PC-3 (cell line): ENCODE measurements at regions of chr21 and their contacts with region 1.

Region 1: DNA sequence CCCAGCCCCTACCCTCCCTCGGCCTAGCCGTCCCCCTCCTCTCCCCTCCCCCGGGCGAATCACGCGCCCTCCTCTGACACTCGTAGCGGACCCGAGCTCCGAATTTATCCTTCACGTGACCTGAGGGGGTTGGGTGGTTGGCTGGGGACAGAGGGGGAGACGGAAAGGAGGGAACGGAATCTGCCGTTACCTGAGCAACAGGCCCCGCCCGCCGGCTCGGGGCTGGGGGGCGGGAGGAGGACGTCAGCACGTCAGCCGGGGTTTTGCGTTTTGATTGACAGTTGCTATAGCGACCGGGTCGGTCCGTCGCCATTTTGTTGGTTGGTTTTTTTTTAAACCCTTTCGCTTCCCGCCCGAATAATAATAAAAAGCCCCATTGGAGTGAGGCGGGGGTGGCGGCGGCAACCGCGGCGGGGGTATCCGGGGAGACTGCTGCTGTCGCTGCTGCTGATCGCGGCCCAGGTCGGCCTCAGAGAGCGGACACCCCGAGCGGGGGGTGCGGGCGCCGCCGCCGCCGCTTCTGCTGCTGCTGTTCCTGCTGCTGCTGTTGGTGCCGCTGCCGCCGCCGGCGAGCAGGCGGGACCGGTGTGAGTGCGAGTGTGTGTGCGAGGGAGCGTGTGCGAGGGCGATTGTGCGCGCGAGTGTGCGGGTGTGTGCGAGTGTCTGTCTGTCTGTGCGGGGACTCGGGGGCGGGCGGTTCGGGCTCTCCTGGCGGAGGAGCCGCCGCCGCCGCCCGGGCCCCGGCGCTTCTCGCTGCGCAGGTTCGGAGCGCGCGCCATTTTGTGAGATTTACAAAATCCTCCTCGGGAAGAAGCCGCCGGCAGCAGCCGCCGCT is at the start of gene DYRK1A:
- DNase-seq: peak; percentile 99
- ATAC-seq: peak; percentile 71
- H3K4me3 ChIP-seq: peak within 1 kb of the TSS; percentile 79
- H3K27ac ChIP-seq: peak within 1 kb of the TSS; percentile 96
- H3K4me1 ChIP-seq: peaks cover 28% of the 10 kb centered on the region
- H3K27me3 ChIP-seq: no peaks in the 10 kb centered on the region
- CTCF ChIP-seq: no peak
- total RNA-seq, gene DYRK1A: 48.7 and 59.1 TPM in 2 replicates

Region 2: DNA sequence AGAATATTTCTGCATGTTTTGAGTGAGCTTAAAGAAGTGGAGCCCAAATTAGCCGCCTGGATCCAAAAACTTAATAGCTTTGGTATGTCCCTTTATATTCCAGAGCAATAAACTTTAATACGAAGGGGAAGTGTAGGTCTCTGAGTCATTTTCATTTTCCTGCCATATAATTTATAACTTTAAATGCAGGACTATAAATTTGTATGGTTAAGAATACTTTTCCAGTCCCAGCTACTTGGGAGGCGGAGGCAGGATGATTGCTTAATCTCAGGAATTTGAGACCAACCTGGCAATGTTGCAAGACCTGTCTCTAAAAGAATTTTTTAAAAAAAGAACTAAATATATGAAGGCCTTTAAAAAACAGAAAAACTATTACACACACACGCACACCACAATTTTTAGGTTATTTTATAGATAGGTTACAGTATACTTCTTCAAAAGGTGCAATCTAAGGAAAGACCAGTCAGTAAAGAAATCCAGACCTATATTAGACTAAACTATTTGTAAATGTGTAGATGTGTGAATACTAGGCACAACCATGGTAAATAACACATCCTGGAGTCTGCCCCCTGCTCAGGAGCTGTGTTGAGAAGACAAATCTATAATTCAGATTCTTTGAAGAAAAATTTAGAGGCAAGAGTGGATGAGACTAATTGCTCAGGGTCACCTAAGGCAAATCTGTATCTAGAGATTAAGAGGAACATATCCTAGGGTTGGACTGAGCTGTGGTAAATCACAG is 213.3 kb before region 1 on chr21:
- CTCF ChIA-PET with region 1: no interaction called
- POLR2A ChIA-PET with region 1: no interaction called
- intact Hi-C with region 1: loop called (anchors 10 kb)
- DNase-seq: peak; percentile 94
- ATAC-seq: peak; percentile 59
- H3K4me3 ChIP-seq: peak overlapping the region; percentile 25; the same call in 1 of the 2 replicates
- H3K27ac ChIP-seq: peak overlapping the region; percentile 90
- H3K4me1 ChIP-seq: peaks cover 42% of the 10 kb centered on the region
- H3K27me3 ChIP-seq: no peaks in the 10 kb centered on the region
- CTCF ChIP-seq: no peak

Region 3: DNA sequence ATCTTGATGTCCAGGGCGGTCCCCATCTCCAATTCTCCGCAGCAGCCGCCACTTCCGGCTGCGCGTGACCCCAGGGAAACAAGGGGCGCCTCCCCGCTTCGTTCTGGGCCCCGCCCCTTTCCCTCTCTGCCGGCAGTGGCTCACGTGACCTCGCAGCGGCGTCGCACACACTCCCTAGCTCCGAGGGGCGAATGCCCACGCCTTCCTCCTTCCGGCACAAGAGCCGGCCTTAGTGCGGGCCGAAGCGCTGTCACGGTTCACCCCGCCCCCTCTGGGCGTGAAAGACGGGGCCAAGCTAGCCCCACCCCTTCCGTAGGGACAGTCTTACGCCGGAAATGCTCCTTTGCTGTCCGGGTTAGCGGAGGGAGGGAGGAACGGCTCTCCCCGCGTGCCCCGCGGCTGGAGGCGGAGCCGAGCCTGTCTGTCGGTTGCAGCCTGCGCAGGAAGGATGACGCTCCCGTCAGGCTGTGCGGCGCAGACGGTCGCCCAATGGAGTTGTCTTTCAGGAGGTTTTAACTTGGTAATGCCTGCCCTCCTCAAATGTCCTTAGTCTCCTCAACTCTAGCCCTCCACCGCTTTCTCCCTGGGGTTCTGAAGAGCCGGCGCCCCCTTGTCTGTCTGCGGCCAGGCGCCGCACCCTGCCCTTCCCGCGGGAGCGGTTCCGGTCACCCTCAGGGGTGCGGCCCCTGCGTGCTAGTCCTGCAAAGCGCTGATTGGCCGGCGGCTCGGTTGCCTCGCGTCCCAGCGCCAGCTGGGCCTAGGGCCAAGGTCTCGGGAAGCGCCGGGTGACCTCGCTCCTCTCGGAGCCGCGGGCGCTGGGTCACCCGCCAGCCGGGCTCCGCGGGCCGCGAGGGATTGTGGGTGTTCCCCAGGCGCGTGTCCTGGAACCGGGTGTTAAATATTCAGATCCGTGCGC is 99.2 kb before region 1 on chr21 and contains the start of gene VPS26C:
- CTCF ChIA-PET with region 1: no interaction called
- POLR2A ChIA-PET with region 1: interaction called, 15 read pairs
- intact Hi-C with region 1: loop called (anchors 1 kb)
- DNase-seq: peak; percentile 99
- ATAC-seq: peak; percentile 86
- H3K4me3 ChIP-seq: peak within 1 kb of the TSS; percentile 69
- H3K27ac ChIP-seq: peak within 1 kb of the TSS; percentile 94
- H3K4me1 ChIP-seq: peaks cover 23% of the 10 kb centered on the region
- H3K27me3 ChIP-seq: no peaks in the 10 kb centered on the region
- CTCF ChIP-seq: no peak
- total RNA-seq, gene VPS26C: 46.8 and 63.3 TPM in 2 replicates

Region 4: GRCh38 chr21:37338671-37339551 is 27.8 kb before region 1 on chr21:
- CTCF ChIA-PET with region 1: no interaction called
- POLR2A ChIA-PET with region 1: interaction called, 4 read pairs
- intact Hi-C with region 1: loop called (anchors 1 kb)
- DNase-seq: peak; percentile 97
- ATAC-seq: peak; percentile 95
- H3K4me3 ChIP-seq: peak overlapping the region; percentile 51
- H3K27ac ChIP-seq: peak overlapping the region; percentile 95
- H3K4me1 ChIP-seq: peaks cover 44% of the 10 kb centered on the region
- H3K27me3 ChIP-seq: no peaks in the 10 kb centered on the region
- CTCF ChIP-seq: no peak

Region 5: DNA sequence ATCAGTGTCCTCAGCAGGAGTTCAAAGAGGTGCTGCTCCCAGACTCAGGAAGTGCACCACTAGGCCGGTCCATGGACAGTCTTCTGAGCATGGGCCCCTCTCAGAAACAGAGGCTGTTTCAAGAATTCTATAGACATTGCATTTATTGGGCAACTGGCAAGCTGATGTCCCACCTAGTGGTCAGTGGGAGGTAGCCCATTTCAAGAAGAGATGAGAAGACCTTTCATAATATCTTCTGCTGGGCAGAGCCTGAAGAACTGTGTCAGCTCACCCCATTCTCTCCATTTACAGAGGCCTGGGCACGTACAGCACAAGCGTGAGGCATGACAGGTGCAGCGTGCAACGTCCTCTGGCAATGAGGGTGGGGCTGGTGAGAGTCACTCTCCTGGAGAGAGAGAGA is 215.9 kb after region 1 on chr21:
- CTCF ChIA-PET with region 1: no interaction called
- POLR2A ChIA-PET with region 1: no interaction called
- intact Hi-C with region 1: loop called (anchors 5 kb)
- DNase-seq: peak; percentile 68
- ATAC-seq: peak; percentile 99
- H3K4me3 ChIP-seq: no peak overlapping the region
- H3K27ac ChIP-seq: no peak overlapping the region
- H3K4me1 ChIP-seq: no peaks in the 10 kb centered on the region
- H3K27me3 ChIP-seq: no peaks in the 10 kb centered on the region
- CTCF ChIP-seq: peak; percentile 91